ENCODE measurements at regions of chr18 and their contacts with region 1.

Region 1: GRCh38 chr18:3771121-3771971 is 321.4 kb downstream of the TGIF1 start:
- DNase-seq: peak; percentile 87
- H3K4me3 ChIP-seq: no peak overlapping the region
- H3K27ac ChIP-seq: peak overlapping the region; percentile 5
- H3K4me1 ChIP-seq: no peaks in the 10 kb centered on the region
- H3K27me3 ChIP-seq: no peaks in the 10 kb centered on the region
- CTCF ChIP-seq: peak; percentile 95

Region 2: GRCh38 chr18:3179430-3180089 is 591.8 kb before region 1 on chr18:
- intact Hi-C with region 1: no loop called
- DNase-seq: no peak
- H3K4me3 ChIP-seq: no peak overlapping the region
- H3K27ac ChIP-seq: no peak overlapping the region
- H3K4me1 ChIP-seq: no peaks in the 10 kb centered on the region
- H3K27me3 ChIP-seq: no peaks in the 10 kb centered on the region
- CTCF ChIP-seq: no peak

Region 3: DNA sequence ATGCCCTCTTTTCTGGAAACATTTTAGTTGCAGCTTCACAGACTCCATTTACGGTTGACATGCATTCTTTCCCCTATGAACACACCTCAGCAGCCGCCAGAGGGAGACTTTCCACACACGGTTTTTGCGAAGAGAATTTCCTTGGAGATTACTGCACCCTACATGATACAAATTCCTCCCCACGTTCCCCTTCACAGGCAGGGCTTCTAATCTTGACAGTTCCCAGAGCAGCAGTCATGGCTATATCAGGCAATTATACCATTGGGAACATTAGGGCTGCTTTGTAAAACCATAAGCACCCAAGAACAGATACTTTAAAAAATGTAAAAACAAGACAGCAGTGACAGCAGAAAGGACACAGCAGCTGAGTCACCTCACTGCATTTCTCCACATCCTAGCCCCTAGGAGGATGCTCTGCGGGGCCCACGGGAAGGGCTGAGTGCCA is 67.6 kb before region 1 on chr18:
- intact Hi-C with region 1: loop called (anchors 5 kb)
- DNase-seq: peak; percentile 76
- H3K4me3 ChIP-seq: no peak overlapping the region
- H3K27ac ChIP-seq: no peak overlapping the region
- H3K4me1 ChIP-seq: no peaks in the 10 kb centered on the region
- H3K27me3 ChIP-seq: no peaks in the 10 kb centered on the region
- CTCF ChIP-seq: peak; percentile 51

Region 4: DNA sequence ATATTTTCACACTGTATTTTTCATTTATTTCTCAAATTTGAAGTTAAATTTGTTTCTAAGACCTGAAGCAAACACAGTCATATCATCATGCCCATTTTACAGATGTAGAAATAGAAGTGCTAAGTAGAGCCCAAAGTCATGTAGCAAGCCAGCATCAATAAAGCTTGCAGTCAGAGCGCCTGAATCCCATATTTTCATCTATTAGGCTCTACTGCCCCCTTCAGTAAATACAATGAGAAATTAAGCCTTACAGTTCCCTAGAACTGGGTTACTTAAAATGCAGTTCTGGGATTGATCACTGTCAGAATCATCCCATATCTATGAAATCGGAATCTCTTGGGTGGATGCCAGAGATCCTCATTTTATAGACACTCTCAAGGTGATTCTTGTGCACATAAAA is 98.5 kb after region 1 on chr18:
- intact Hi-C with region 1: loop called (anchors 5 kb)
- DNase-seq: no peak
- H3K4me3 ChIP-seq: no peak overlapping the region
- H3K27ac ChIP-seq: no peak overlapping the region
- H3K4me1 ChIP-seq: no peaks in the 10 kb centered on the region
- H3K27me3 ChIP-seq: no peaks in the 10 kb centered on the region
- CTCF ChIP-seq: peak; percentile 27

Region 5: GRCh38 chr18:3993941-3994687 is 222.8 kb after region 1 on chr18:
- intact Hi-C with region 1: loop called (anchors 5 kb)
- DNase-seq: no peak
- H3K4me3 ChIP-seq: no peak overlapping the region
- H3K27ac ChIP-seq: no peak overlapping the region
- H3K4me1 ChIP-seq: no peaks in the 10 kb centered on the region
- H3K27me3 ChIP-seq: no peaks in the 10 kb centered on the region
- CTCF ChIP-seq: no peak